Cardiac septum (tissue), 1 donor: ENCODE measurements at regions of chr17 and their contacts with region 1.

Region 1: GRCh38 chr17:64420143-64420971 is 28.6 kb upstream of the MILR1 start:
- DNase-seq: no peak

Region 2: DNA sequence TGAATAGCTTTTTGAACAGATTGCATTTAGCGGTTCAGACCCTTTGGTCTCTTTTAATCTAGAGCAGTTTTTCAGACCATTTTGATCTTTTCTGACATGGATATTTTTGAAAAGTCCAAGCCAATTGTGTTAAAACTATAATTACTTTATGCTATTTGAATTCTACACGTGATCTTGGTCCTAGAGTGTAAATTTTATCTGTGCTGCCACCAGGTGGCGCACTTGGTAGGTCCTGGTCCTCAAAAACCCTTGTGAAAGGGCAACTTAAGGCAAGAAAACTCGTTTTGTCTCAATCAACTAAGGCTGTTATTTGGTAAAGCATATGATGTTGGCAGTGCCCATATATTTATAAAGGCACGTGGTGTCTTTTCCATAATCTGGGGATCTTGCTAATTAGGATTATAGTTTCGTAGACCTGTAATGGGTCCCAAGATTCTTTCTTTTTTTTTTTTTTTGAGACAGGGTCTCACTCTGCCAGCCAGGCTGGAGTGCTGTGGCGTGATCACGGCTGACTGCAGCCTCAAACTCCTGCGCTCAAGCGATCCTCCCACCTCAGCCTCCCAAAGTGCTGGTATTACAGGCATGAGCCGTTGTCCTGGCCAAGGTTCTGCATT is 113.4 kb before region 1 on chr17:
- intact Hi-C with region 1: loop called (anchors 2 kb)
- DNase-seq: no peak

Region 3: GRCh38 chr17:64320613-64321553 is 99.5 kb before region 1 on chr17:
- intact Hi-C with region 1: loop called (anchors 1 kb)
- DNase-seq: no peak

Region 4: GRCh38 chr17:64357191-64357981 is 63.0 kb before region 1 on chr17:
- intact Hi-C with region 1: no loop called
- DNase-seq: peak; percentile 79

Region 5: GRCh38 chr17:64377769-64378282 is 42.5 kb before region 1 on chr17:
- intact Hi-C with region 1: no loop called
- DNase-seq: no peak

Region 6: GRCh38 chr17:64491034-64491859 is 70.9 kb after region 1 on chr17:
- intact Hi-C with region 1: loop called (anchors 1 kb)
- DNase-seq: no peak

Region 7: DNA sequence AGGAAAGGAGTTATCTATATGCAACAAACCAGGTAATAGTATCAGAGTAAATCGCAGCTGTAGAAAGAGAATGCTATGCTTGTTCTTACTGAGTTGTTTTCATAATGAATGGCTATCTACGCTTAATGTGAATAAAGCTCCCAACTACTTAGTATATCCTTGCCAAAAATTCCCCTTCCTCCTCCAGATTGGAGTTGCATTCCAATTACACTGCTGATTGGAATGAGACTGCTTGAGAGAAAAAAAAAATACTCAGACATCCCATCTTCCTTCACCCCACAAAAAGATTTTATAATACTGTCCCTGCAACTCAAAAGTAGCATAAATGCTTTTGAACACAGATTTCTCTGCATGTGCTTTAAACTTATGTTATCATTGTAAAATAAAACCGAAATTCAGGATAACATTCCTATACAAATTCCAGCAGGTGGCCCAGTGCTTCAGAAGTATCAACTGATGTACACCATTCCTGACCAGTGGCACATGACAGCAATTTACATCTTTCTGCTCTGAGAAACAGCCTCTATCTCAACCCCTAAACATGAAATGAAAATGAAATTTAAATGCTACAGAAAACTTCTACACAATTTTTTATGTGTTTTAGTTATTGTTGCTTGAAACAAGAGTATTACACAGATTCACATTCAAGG is 194.8 kb after region 1 on chr17:
- intact Hi-C with region 1: no loop called
- DNase-seq: no peak

Region 8: GRCh38 chr17:64648234-64648633 is 227.9 kb after region 1 on chr17:
- intact Hi-C with region 1: loop called (anchors 5 kb)
- DNase-seq: no peak